ENCODE measurements at regions of chr16 and their contacts with region 1.

Region 1: DNA sequence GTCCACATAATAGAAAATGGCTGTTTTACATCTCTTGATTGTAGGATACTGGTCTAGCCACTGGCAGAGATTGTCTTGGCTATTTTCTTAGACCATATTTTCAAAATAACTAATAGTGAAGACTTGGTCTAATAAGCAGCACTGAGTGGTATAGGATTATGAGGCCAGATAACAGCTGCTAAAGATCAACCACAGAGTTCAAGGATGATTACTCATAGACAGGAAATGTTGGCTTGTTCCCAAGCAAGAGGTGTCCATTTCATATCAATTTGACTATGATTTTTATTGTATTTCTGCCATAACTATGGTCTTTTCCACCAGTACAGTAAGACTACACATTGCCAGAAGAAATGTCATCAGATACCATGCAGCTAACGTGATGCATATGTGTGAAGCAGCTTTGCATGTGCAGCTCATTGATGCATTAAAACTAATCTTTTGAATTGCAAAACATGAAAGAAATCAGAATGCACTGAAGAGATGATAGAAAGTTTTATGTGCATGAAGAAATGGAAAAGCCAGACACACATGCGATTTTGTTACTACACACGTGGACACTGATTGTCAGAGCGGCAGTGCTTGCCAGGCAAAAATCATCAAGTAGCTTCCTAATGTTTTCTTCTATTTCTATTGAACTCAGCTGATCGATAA is 693.3 kb downstream of the CDH11 start:
- DNase-seq: peak; percentile 75
- ATAC-seq: peak; percentile 82
- H3K4me3 ChIP-seq: no peak overlapping the region
- H3K27ac ChIP-seq: no peak overlapping the region
- H3K4me1 ChIP-seq: peaks cover 13% of the 10 kb centered on the region
- H3K27me3 ChIP-seq: no peaks in the 10 kb centered on the region
- CTCF ChIP-seq: no peak

Region 2: GRCh38 chr16:63769211-63769610 is 659.4 kb before region 1 on chr16:
- CTCF ChIA-PET with region 1: no interaction called
- POLR2A ChIA-PET with region 1: no interaction called
- intact Hi-C with region 1: no loop called
- DNase-seq: no peak
- ATAC-seq: no peak
- H3K4me3 ChIP-seq: no peak overlapping the region
- H3K27ac ChIP-seq: no peak overlapping the region
- H3K4me1 ChIP-seq: no peaks in the 10 kb centered on the region
- H3K27me3 ChIP-seq: no peaks in the 10 kb centered on the region
- CTCF ChIP-seq: no peak

Region 3: GRCh38 chr16:64211331-64211730 is 217.3 kb before region 1 on chr16:
- CTCF ChIA-PET with region 1: no interaction called
- POLR2A ChIA-PET with region 1: no interaction called
- intact Hi-C with region 1: no loop called
- DNase-seq: no peak
- ATAC-seq: no peak
- H3K4me3 ChIP-seq: no peak overlapping the region
- H3K27ac ChIP-seq: no peak overlapping the region
- H3K4me1 ChIP-seq: no peaks in the 10 kb centered on the region
- H3K27me3 ChIP-seq: no peaks in the 10 kb centered on the region
- CTCF ChIP-seq: no peak

Region 4: GRCh38 chr16:66335704-66336329 is 1907.2 kb after region 1 on chr16:
- CTCF ChIA-PET with region 1: interaction called, 10 read pairs
- POLR2A ChIA-PET with region 1: no interaction called
- intact Hi-C with region 1: no loop called
- DNase-seq: no peak
- ATAC-seq: no peak
- H3K4me3 ChIP-seq: no peak overlapping the region
- H3K27ac ChIP-seq: no peak overlapping the region
- H3K4me1 ChIP-seq: no peaks in the 10 kb centered on the region
- H3K27me3 ChIP-seq: no peaks in the 10 kb centered on the region
- CTCF ChIP-seq: no peak